ENCODE measurements at regions of chr12 and their contacts with region 1.

Region 1: GRCh38 chr12:112151766-112152541 is 26.6 kb downstream of the TRAFD1 start:
- DNase-seq: no peak
- ATAC-seq: no peak
- H3K4me3 ChIP-seq: no peak overlapping the region
- H3K4me3 Mint-ChIP-seq: no peak overlapping the region
- H3K27ac ChIP-seq: no peak overlapping the region
- H3K27ac Mint-ChIP-seq: peak overlapping the region in 7 of 9 donors; percentile 10 to 78 (median 56)
- H3K4me1 ChIP-seq: no peaks in the 10 kb centered on the region
- H3K4me1 Mint-ChIP-seq: peaks cover 0 to 24% (median 3%) of the 10 kb centered on the region in 7 donors
- H3K27me3 ChIP-seq: no peaks in the 10 kb centered on the region
- H3K27me3 Mint-ChIP-seq: no peaks in the 10 kb centered on the region

Region 2: DNA sequence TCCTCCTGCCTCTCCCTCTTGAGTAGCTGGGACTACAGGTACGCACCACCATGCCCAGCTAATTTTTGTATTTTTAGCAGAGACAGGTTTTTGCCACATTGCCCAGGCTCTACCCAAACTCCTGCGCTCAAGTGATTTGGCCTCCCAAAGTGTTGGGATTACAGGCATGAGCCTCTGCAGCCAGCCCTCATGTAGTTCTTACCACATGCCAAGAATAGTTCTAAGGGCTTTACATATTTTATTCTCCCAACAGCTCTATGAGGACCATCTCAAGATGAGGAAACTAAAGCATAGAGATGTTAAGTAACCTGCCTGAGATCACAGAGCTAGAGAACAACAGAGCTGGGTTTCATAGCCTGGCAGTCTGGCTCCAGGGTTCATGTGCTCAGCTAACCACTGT is 423.2 kb before region 1 on chr12:
- CTCF ChIA-PET with region 1: no interaction called
- POLR2A ChIA-PET with region 1: no interaction called
- intact Hi-C with region 1: no loop called
- DNase-seq: no peak
- ATAC-seq: no peak
- H3K4me3 ChIP-seq: no peak overlapping the region
- H3K4me3 Mint-ChIP-seq: no peak overlapping the region
- H3K27ac ChIP-seq: no peak overlapping the region
- H3K27ac Mint-ChIP-seq: no peak overlapping the region
- H3K4me1 ChIP-seq: no peaks in the 10 kb centered on the region
- H3K4me1 Mint-ChIP-seq: no peaks in the 10 kb centered on the region
- H3K27me3 ChIP-seq: no peaks in the 10 kb centered on the region
- H3K27me3 Mint-ChIP-seq: no peaks in the 10 kb centered on the region

Region 3: DNA sequence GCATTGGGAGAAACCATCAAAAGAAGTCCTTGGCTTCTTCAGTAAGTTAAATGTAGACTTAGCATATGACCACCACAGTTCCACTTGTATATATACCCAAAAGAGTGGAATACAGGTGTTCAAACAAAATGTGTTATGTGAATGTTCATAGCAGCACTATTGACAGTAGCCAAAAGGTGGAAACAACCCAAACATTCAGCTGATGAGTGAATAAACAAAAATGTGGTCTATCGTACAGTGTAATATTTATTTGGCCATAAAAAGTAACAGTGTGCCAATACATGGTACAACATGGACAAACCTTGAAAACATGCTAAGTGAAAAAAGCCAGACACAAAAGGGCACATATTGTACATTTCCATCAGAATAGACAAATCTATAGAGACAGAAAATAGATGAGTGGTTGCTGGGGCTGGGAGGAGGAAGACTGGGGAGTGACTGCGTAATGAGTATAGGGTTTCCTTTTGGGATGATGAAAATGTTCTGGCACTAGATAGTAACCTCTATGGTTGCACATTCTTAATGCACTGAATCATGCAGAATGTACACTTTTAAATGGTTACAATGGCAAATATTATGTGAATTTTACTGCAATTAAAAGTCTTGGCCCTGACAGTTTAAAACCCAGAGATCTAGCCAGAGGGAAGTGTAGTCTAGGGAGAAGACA is 133.2 kb before region 1 on chr12:
- CTCF ChIA-PET with region 1: no interaction called
- POLR2A ChIA-PET with region 1: no interaction called
- intact Hi-C with region 1: no loop called
- DNase-seq: no peak
- ATAC-seq: no peak
- H3K4me3 ChIP-seq: no peak overlapping the region
- H3K4me3 Mint-ChIP-seq: peak overlapping the region in 5 of 10 donors; percentile 7 to 48 (median 26)
- H3K27ac ChIP-seq: no peak overlapping the region
- H3K27ac Mint-ChIP-seq: peak overlapping the region in 8 of 9 donors; percentile 20 to 88 (median 74)
- H3K4me1 ChIP-seq: peaks cover 10 to 40% of the 10 kb centered on the region in 2 donors
- H3K4me1 Mint-ChIP-seq: peaks cover 38 to 78% (median 62%) of the 10 kb centered on the region in 7 donors
- H3K27me3 ChIP-seq: no peaks in the 10 kb centered on the region
- H3K27me3 Mint-ChIP-seq: no peaks in the 10 kb centered on the region

Region 4: DNA sequence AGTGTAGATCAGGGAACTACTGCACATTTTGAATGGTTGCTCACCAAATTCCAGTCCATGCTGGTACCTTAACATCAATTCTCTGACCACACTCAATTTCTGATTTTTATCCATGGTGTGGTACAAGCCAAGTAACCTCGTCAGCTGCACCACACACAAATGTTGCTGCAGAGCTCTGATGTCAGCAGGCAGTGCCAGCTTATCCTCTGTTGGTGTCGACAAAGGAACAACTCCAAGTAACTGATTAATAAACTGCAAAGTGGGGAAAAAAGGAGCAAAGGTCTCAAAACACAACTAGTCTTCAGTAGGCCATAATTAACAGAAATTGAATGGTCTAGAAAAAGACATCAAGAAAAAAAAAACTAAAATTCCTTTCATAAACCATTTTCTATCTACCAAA is 90.8 kb before region 1 on chr12:
- CTCF ChIA-PET with region 1: no interaction called
- POLR2A ChIA-PET with region 1: no interaction called
- intact Hi-C with region 1: no loop called
- DNase-seq: no peak
- ATAC-seq: no peak
- H3K4me3 ChIP-seq: no peak overlapping the region
- H3K4me3 Mint-ChIP-seq: no peak overlapping the region
- H3K27ac ChIP-seq: no peak overlapping the region
- H3K27ac Mint-ChIP-seq: peak overlapping the region in 3 of 9 donors; percentile 37 to 86 (median 67)
- H3K4me1 ChIP-seq: no peaks in the 10 kb centered on the region
- H3K4me1 Mint-ChIP-seq: no peaks in the 10 kb centered on the region
- H3K27me3 ChIP-seq: no peaks in the 10 kb centered on the region
- H3K27me3 Mint-ChIP-seq: no peaks in the 10 kb centered on the region

Region 5: DNA sequence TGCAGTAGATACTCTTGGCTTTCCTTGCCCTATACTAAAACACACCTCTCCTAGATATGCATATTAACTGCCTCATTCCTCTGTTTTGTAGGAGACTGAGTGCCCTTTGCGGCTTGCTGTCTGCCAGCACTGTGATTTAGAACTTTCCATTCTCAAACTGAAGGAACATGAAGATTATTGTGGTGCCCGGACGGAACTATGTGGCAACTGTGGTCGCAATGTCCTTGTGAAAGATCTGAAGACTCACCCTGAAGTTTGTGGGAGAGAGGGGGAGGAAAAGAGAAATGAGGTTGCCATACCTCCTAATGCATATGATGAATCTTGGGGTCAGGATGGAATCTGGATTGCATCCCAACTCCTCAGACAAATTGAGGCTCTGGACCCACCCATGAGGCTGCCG is 11.2 kb before region 1 on chr12:
- CTCF ChIA-PET with region 1: no interaction called
- POLR2A ChIA-PET with region 1: interaction called, 11 read pairs
- intact Hi-C with region 1: no loop called
- DNase-seq: no peak
- ATAC-seq: peak; percentile 48
- H3K4me3 ChIP-seq: no peak overlapping the region
- H3K4me3 Mint-ChIP-seq: no peak overlapping the region
- H3K27ac ChIP-seq: no peak overlapping the region
- H3K27ac Mint-ChIP-seq: peak overlapping the region in 3 of 9 donors; percentile 1 to 29 (median 16)
- H3K4me1 ChIP-seq: no peaks in the 10 kb centered on the region
- H3K4me1 Mint-ChIP-seq: peaks cover 0 to 8% (median 5%) of the 10 kb centered on the region in 7 donors
- H3K27me3 ChIP-seq: no peaks in the 10 kb centered on the region
- H3K27me3 Mint-ChIP-seq: no peaks in the 10 kb centered on the region